Activated naive CD4-positive, alpha-beta T cell treated with anti-CD3 and anti-CD28 coated beads for 36 hours (primary cell): ENCODE measurements at regions of chr12 and their contacts with region 1.

Region 1: DNA sequence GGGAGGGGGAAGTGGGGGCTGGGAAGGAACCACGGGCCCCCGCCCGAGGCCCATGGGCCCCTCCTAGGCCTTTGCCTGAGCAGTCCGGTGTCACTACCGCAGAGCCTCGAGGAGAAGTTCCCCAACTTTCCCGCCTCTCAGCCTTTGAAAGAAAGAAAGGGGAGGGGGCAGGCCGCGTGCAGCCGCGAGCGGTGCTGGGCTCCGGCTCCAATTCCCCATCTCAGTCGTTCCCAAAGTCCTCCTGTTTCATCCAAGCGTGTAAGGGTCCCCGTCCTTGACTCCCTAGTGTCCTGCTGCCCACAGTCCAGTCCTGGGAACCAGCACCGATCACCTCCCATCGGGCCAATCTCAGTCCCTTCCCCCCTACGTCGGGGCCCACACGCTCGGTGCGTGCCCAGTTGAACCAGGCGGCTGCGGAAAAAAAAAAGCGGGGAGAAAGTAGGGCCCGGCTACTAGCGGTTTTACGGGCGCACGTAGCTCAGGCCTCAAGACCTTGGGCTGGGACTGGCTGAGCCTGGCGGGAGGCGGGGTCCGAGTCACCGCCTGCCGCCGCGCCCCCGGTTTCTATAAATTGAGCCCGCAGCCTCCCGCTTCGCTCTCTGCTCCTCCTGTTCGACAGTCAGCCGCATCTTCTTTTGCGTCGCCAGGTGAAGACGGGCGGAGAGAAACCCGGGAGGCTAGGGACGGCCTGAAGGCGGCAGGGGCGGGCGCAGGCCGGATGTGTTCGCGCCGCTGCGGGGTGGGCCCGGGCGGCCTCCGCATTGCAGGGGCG is at the start of gene GAPDH:
- DNase-seq: peak; percentile 90
- H3K4me3 Mint-ChIP-seq: peak within 1 kb of the TSS; percentile 94
- H3K27ac Mint-ChIP-seq: peak within 1 kb of the TSS; percentile 99
- H3K4me1 Mint-ChIP-seq: peaks cover 41% of the 10 kb centered on the region
- H3K27me3 Mint-ChIP-seq: no peaks in the 10 kb centered on the region
- total RNA-seq, gene GAPDH: 6,537 to 6,787 TPM

Region 2: DNA sequence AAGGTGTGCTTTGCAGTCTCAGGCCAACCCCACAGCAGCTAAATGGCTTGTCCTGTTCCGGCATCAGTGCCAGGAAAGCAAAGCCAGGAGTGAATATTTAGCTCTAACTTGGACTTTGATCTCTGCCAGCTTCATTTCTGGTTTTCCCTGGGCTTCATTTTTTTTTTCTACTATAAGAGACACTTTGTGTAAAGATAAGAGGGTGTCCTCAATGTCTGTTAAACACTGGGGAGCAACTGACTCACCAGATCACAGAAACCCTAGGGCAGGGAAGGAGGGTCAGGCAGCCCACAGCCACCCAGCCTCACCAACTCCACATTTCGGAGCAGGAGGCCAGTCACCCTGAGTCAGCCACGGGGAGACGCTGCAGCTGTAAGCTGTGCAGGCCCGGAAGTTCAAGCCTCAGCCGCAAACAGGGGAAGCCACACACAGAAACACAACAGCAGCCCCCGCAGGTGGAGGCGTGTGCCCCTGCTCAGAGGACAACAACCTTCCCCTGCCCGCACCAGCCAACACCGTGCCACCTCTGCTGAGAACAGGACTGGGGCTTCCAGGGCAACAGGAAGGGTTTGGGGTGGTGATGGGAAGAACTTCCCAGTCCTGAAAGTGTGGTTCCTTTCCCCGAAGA is 198.5 kb before region 1 on chr12:
- CTCF ChIA-PET with region 1: no interaction called
- intact Hi-C with region 1: loop called (anchors 2 kb)
- DNase-seq: peak; percentile 94
- H3K4me3 Mint-ChIP-seq: no peak overlapping the region
- H3K27ac Mint-ChIP-seq: no peak overlapping the region
- H3K4me1 Mint-ChIP-seq: peaks cover 46% of the 10 kb centered on the region
- H3K27me3 Mint-ChIP-seq: no peaks in the 10 kb centered on the region

Region 3: GRCh38 chr12:6394398-6394797 is 139.7 kb before region 1 on chr12:
- CTCF ChIA-PET with region 1: no interaction called
- intact Hi-C with region 1: no loop called
- DNase-seq: no peak
- H3K4me3 Mint-ChIP-seq: no peak overlapping the region
- H3K27ac Mint-ChIP-seq: no peak overlapping the region
- H3K4me1 Mint-ChIP-seq: no peaks in the 10 kb centered on the region
- H3K27me3 Mint-ChIP-seq: no peaks in the 10 kb centered on the region

Region 4: DNA sequence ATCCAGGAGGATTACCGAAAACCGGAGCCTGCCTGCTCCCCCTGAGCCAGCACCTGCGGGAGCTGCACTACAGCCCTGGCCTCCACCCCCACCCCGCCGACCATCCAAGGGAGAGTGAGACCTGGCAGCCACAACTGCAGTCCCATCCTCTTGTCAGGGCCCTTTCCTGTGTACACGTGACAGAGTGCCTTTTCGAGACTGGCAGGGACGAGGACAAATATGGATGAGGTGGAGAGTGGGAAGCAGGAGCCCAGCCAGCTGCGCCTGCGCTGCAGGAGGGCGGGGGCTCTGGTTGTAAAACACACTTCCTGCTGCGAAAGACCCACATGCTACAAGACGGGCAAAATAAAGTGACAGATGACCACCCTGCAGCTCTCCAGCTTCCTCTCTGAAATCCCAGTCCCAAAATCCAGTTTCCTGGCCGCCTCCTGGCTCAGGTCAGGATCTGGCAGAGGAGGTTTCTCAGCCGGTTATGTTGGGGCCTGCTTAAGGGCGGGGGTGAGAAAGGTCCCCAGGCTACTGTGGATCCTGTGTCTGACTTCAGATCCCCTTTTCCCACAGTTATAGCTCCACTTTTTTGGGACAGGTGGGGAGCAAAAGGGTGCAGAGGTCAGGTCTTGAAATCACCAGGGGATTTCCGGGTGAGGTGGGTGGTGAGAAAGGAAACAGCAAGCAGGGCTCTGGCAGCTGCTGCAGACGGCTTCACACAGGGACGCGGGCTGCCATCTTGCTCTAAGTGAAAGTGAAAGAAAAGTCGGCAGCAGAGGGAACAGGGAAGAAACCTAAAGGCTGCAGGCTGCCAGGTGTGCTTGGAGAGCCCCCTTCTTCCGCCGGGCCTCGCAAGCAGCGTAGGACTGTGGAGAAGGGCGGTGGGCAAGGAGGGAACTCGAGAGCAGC is 82.5 kb before region 1 on chr12 and contains the start of gene TAPBPL:
- CTCF ChIA-PET with region 1: no interaction called
- intact Hi-C with region 1: loop called (anchors 1 kb)
- DNase-seq: peak; percentile 93
- H3K4me3 Mint-ChIP-seq: peak within 1 kb of the TSS; percentile 98
- H3K27ac Mint-ChIP-seq: peak within 1 kb of the TSS; percentile 98
- H3K4me1 Mint-ChIP-seq: peaks cover 65% of the 10 kb centered on the region
- H3K27me3 Mint-ChIP-seq: no peaks in the 10 kb centered on the region
- total RNA-seq, gene TAPBPL: 27.9 to 28.0 TPM

Region 5: GRCh38 chr12:6493497-6494257 is 40.4 kb before region 1 on chr12 and contains the start of gene NCAPD2:
- CTCF ChIA-PET with region 1: interaction called, 6 read pairs
- intact Hi-C with region 1: loop called (anchors 1 kb)
- DNase-seq: peak; percentile 98
- H3K4me3 Mint-ChIP-seq: peak within 1 kb of the TSS; percentile 98
- H3K27ac Mint-ChIP-seq: peak within 1 kb of the TSS; percentile 99
- H3K4me1 Mint-ChIP-seq: peaks cover 33% of the 10 kb centered on the region
- H3K27me3 Mint-ChIP-seq: no peaks in the 10 kb centered on the region
- total RNA-seq, gene NCAPD2: 252 to 261 TPM

Region 6: GRCh38 chr12:6574576-6575295 is 40.6 kb after region 1 on chr12:
- CTCF ChIA-PET with region 1: interaction called, 3 read pairs
- intact Hi-C with region 1: loop called (anchors 1 kb)
- DNase-seq: peak; percentile 59
- H3K4me3 Mint-ChIP-seq: no peak overlapping the region
- H3K27ac Mint-ChIP-seq: peak overlapping the region; percentile 87
- H3K4me1 Mint-ChIP-seq: peaks cover 45% of the 10 kb centered on the region
- H3K27me3 Mint-ChIP-seq: no peaks in the 10 kb centered on the region

Region 7: DNA sequence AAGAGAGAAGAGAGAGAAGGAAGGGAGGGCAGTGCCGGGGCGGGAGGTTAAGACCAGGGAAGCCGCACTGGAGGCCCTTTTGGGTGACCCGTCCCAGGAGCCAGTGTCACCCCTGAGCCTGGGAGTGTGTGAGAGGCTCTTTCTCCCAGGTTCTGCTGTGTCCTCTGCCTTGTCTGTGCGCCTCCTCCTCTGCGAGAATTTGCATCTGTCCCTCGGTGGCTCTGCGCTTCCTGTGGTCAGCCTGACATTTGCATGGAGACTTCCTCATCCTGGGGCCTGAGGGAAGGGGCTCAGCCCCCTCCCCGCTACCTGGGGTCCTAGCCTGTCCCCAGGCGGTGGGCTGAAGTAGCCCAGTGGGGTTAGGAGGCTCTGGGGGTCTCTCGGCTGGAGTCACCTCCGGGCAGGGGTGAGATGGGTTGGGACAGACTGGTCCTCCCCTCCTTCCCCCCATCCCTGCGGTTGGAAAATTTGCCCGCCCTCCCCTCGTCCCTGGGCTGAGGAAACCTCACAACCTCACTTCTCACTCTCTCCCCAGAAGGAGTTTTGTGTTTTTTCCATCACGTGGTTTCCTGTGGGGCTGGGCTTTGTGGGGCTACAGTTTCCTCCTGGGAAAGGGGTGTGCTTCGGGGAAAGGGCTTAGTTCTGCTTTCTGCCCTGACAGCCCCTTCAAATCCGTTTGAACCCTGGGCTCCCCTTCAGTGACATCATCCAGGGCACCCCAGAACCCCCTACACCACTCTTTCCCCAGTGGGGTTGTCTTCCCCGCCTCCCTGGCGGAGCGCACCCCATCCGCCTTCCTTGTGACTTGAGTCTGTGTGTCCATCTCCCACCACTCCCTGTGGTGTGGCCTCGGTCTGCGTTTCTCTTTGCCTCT is 419.6 kb after region 1 on chr12:
- CTCF ChIA-PET with region 1: no interaction called
- intact Hi-C with region 1: loop called (anchors 5 kb)
- DNase-seq: peak; percentile 87
- H3K4me3 Mint-ChIP-seq: peak overlapping the region; percentile 98
- H3K27ac Mint-ChIP-seq: peak overlapping the region; percentile 93
- H3K4me1 Mint-ChIP-seq: peaks cover 69% of the 10 kb centered on the region
- H3K27me3 Mint-ChIP-seq: no peaks in the 10 kb centered on the region

Region 8: DNA sequence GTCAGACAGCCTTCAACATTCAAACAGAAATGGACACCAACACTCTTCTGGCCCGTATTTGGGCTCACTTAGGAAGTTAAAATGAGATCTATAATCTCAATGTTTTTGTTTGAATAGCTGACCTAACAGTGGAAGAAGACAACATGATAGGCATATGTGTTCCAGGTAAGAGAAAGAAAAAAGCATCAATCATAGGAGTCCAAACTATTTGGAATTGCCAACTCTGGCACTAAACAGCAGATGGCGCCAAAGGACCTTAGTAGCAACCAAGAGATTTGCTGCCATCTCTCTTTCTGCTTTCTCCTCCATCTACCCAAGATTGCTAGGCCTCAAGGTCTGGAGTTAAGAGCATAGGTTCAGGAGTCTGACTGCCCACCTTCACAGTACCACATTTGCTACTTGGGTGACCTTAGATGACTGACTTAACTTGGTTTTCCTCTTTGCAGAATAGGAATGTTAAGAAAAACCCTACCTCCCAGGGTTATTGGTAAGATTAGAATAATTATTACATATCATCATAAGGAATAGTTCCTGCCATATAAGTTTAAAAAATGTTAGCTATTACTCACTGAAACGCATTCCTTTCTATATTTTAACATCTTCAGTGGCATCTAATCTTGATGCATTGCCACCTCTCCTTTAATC is 685.6 kb after region 1 on chr12:
- CTCF ChIA-PET with region 1: no interaction called
- intact Hi-C with region 1: no loop called
- DNase-seq: peak; percentile 87
- H3K4me3 Mint-ChIP-seq: no peak overlapping the region
- H3K27ac Mint-ChIP-seq: no peak overlapping the region
- H3K4me1 Mint-ChIP-seq: no peaks in the 10 kb centered on the region
- H3K27me3 Mint-ChIP-seq: no peaks in the 10 kb centered on the region